ENCODE measurements at regions of chr10 and their contacts with region 1.

Region 1: GRCh38 chr10:63217120-63217605 is 84.0 kb downstream of the NRBF2 start:
- ATAC-seq: peak; percentile 58 to 84 (median 74)
- H3K4me3 ChIP-seq: no peak overlapping the region
- H3K27ac ChIP-seq: no peak overlapping the region
- H3K4me1 ChIP-seq: no peaks in the 10 kb centered on the region

Region 2: DNA sequence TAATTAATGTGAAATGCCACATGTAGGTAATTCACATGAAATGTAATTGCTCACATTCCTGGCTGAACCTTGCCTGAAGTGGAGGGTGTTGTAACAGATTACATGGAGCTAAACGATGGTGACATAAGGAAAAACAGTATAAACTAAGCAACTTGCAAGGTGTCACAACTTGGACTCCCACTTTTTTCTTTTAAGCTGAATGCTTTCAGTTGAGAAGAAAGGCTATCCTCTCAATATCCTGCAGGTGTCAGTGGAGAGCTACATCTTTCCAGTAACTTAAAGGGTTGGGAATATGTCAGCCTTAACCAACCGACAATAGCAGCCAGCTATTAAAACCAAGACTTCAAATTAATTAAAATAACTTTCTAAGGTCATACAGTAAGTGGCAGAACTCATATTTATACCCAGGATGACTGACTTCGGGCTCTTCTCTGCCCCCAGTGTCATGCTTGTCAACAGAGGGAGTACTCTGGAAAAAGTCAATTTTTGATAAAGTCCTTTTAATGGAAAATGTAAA is 50.4 kb before region 1 on chr10:
- in situ Hi-C with region 1: no loop called
- ATAC-seq: peak in 7 of 8 experiments; percentile 40 to 72 (median 61)
- H3K4me3 ChIP-seq: no peak overlapping the region
- H3K27ac ChIP-seq: no peak overlapping the region
- H3K4me1 ChIP-seq: no peaks in the 10 kb centered on the region

Region 3: GRCh38 chr10:63465293-63466143 is 248.4 kb after region 1 on chr10 and contains the start of gene JMJD1C:
- in situ Hi-C with region 1: loop called in 1 of 9 experiments (anchors 25 kb)
- ATAC-seq: peak; percentile 76 to 87 (median 82)
- H3K4me3 ChIP-seq: peak within 1 kb of the TSS; percentile 71 to 88 (median 76)
- H3K27ac ChIP-seq: peak within 1 kb of the TSS; percentile 79 to 85
- H3K4me1 ChIP-seq: peaks cover 0 to 5% of the 10 kb centered on the region in 2 donors
- total RNA-seq, gene JMJD1C: 48.3 to 137 (median 57.1) TPM

Region 4: GRCh38 chr10:63603709-63604445 is 386.7 kb after region 1 on chr10:
- in situ Hi-C with region 1: loop called in 1 of 9 experiments (anchors 25 kb)
- ATAC-seq: no peak
- H3K4me3 ChIP-seq: no peak overlapping the region
- H3K27ac ChIP-seq: no peak overlapping the region
- H3K4me1 ChIP-seq: peaks cover 0 to 3% of the 10 kb centered on the region in 2 donors